Activated CD4-positive, alpha-beta T cell treated with anti-CD3 and anti-CD28 coated beads for 36 hours (primary cell): ENCODE measurements at regions of chr9 and their contacts with region 1.

Region 1: DNA sequence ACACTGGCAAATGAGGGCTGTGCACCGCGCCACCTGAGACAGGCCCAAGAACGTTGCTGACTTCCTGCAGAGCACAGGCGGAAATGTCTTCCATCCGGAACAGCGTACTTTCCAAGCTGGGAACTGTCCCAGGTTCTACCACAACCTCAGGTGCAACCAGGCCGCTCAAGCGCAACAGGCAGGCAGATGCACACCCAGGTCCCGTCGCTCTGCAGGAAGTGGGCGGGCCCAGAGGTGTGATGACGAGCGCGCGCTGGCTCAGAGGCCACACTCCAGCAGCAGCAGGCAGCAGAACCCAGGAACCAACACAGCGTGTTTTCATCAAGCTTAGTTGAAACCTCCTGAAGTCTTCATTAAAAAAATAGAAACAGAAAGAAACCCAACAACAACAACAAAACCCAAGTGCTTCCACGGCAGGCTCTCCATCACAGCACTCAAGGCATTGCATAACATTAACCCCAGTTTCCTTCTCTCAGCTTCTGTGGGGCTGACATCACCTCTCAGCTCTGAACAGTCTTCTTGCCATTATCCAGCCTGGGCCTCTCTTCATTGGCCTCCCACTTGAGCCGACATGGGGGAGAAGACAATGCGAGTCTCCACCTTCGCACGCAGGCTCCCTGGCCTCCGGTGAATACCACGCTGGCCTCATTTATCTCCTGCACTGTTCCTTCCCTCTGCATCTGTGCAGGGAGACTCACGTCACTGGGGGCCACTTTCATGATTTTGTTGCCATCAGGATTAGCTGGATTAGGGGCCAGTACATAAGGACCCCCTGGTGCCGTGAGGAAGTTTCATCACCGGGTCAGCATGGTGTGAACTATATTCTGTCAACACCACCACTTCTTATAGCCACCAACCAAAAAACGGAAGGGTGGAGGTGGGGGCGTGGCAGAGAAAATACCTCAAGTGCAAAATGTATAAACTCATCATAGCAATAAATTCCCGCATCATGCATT is 22.1 kb downstream of the PTCH1 start:
- DNase-seq: peak; percentile 92
- ATAC-seq: peak; percentile 98
- H3K4me3 Mint-ChIP-seq: peak overlapping the region; percentile 68
- H3K27ac Mint-ChIP-seq: peak overlapping the region; percentile 93
- H3K4me1 Mint-ChIP-seq: peaks cover 68% of the 10 kb centered on the region
- H3K27me3 Mint-ChIP-seq: no peaks in the 10 kb centered on the region

Region 2: DNA sequence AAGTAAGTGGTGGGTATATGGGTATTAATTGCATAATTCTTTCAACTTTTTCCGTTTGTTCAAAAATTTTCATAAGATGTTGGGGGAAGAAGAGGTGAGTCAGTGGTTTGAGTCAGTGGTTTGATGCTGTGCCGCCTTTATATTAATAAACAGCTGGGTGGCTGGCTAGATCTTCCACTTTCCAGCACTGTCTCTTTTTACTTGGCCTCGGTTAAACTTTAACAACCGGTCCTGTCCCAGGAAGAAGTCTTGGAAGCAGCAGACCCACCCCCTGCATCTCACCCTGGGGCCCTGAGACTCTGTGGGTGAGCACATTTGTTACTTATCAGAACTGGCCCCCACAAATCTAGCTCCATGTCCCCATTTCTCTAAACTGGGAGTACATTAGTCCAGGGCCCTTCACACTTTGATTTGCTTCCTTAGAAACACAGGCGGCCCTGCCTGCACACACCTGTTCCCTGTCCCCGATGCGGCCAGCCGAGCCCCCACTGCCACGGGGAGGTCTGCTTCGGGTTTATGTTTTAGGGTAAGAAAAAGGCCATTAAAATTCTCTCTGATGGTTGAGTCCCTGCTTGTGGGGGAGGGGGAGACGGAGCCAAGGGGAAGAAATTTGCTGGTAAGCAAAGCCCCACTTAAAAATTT is 68.7 kb before region 1 on chr9:
- CTCF ChIA-PET with region 1: no interaction called
- POLR2A ChIA-PET with region 1: no interaction called
- intact Hi-C with region 1: loop called in 1 of 2 experiments (anchors 1 kb)
- DNase-seq: peak; percentile 25
- ATAC-seq: no peak
- H3K4me3 Mint-ChIP-seq: peak overlapping the region; percentile 72
- H3K27ac Mint-ChIP-seq: peak overlapping the region; percentile 70
- H3K4me1 Mint-ChIP-seq: peaks cover 10% of the 10 kb centered on the region
- H3K27me3 Mint-ChIP-seq: no peaks in the 10 kb centered on the region

Region 3: GRCh38 chr9:95462249-95463147 is 32.2 kb before region 1 on chr9:
- CTCF ChIA-PET with region 1: no interaction called
- POLR2A ChIA-PET with region 1: no interaction called
- intact Hi-C with region 1: loop called in 1 of 2 experiments (anchors 1 kb)
- DNase-seq: peak; percentile 89
- ATAC-seq: peak; percentile 94
- H3K4me3 Mint-ChIP-seq: peak overlapping the region; percentile 72
- H3K27ac Mint-ChIP-seq: peak overlapping the region; percentile 72
- H3K4me1 Mint-ChIP-seq: peaks cover 26% of the 10 kb centered on the region
- H3K27me3 Mint-ChIP-seq: peaks cover 4% of the 10 kb centered on the region